PC-9 (cell line): ENCODE measurements at regions of chr1 and their contacts with region 1.

Region 1: DNA sequence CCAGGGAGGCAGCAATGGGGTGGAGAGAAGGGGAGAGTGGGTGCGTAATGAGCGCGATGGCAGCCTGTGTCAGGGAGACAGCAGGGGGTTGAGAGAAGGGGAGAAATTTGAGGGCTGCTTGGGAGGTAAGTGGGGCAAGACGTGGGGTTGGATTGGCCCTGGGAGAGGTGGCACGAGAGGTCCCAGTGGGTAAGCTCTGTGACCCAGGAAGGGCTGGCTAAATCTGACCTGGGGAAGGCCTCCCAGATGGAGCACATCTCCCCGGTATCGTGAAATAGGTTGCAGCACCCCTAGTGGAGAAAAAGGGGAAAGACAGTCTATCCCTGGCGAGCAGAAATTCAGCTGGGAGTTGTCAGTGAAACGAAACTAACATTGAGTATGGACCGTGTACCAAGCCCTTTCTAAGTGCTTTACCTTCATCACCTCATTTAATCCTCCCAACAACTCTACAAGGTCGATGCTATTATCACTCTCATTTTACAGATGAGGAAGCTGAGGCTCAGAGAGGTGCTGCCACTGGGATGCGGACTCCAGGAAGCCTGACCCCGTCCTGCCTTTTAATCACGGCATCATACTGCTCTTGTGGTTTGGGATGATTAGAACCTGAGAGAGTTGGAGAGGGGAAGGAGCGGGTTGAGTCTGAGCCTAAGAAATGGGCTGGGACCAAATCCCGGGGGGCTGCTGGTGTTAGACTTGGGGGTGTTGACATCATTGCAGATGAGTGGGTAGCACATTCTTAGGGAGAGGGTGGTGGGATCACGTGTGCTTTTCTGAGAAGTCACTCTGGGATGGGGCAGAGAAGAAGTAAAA is 56.6 kb upstream of the RPL11 start:
- DNase-seq: peak; percentile 59 to 62
- H3K4me3 ChIP-seq: peak overlapping the region; percentile 54; the same call in 1 of the 2 replicates
- H3K27ac ChIP-seq: peak overlapping the region; percentile 30; the same call in 1 of the 2 replicates
- H3K4me1 ChIP-seq: no peaks in the 10 kb centered on the region
- H3K27me3 ChIP-seq: no peaks in the 10 kb centered on the region
- CTCF ChIP-seq: peak; percentile 80

Region 2: GRCh38 chr1:23118957-23119792 is 515.9 kb before region 1 on chr1:
- CTCF ChIA-PET with region 1: interaction called, 13 read pairs
- POLR2A ChIA-PET with region 1: no interaction called
- intact Hi-C with region 1: no loop called
- DNase-seq: no peak
- H3K4me3 ChIP-seq: no peak overlapping the region
- H3K27ac ChIP-seq: no peak overlapping the region
- H3K4me1 ChIP-seq: peaks cover 16% of the 10 kb centered on the region
- H3K27me3 ChIP-seq: no peaks in the 10 kb centered on the region
- CTCF ChIP-seq: no peak

Region 3: DNA sequence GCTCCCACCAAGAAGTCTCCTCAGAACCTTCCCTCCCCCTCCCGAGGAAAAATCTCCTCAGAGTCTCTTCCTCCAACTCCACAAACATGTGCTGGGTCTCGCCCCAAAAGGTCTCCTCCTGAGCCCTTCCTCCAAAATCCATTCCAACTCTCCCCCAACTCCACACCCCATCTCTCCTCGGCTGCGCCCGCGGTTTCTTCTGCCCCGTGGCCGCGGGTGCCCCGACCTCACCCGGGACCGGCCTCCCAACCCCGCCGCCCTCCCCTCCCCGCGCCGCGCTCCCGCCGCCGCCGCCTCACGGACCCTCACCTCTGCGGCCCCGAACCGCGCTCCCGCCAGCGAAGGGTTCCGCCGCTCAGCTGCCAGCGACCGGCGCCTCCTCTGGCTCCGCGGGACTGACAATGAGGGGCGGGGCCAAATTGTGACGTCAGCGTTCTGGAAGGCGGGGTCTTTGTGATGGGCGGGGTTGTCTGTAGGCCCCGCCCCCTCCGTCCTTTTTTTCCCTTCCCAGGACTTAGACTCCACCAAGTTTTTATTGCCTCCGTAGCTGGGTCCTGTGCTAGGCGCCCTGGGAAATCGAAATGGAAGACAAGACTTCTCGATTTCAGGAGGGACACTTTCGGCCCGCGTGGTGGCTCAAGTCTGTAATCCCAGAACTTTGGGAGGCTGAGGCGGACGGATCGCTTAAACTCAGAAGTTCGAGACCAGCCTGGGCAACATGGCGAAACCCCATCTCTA is 466.4 kb before region 1 on chr1 and contains the start of gene LUZP1:
- CTCF ChIA-PET with region 1: interaction called, 15 read pairs
- POLR2A ChIA-PET with region 1: no interaction called
- intact Hi-C with region 1: no loop called
- DNase-seq: peak; percentile 39 to 80
- H3K4me3 ChIP-seq: peak within 1 kb of the TSS; percentile 75
- H3K27ac ChIP-seq: peak within 1 kb of the TSS; percentile 58
- H3K4me1 ChIP-seq: peaks cover 6% of the 10 kb centered on the region
- H3K27me3 ChIP-seq: no peaks in the 10 kb centered on the region
- CTCF ChIP-seq: no peak
- total RNA-seq, gene LUZP1: 35.0 and 37.6 TPM in 2 replicates

Region 4: GRCh38 chr1:23496490-23497181 is 138.4 kb before region 1 on chr1:
- CTCF ChIA-PET with region 1: interaction called, 13 read pairs
- POLR2A ChIA-PET with region 1: no interaction called
- intact Hi-C with region 1: no loop called
- DNase-seq: no peak
- H3K4me3 ChIP-seq: no peak overlapping the region
- H3K27ac ChIP-seq: no peak overlapping the region
- H3K4me1 ChIP-seq: no peaks in the 10 kb centered on the region; the same call in 1 of the 2 replicates
- H3K27me3 ChIP-seq: no peaks in the 10 kb centered on the region
- CTCF ChIP-seq: no peak

Region 5: DNA sequence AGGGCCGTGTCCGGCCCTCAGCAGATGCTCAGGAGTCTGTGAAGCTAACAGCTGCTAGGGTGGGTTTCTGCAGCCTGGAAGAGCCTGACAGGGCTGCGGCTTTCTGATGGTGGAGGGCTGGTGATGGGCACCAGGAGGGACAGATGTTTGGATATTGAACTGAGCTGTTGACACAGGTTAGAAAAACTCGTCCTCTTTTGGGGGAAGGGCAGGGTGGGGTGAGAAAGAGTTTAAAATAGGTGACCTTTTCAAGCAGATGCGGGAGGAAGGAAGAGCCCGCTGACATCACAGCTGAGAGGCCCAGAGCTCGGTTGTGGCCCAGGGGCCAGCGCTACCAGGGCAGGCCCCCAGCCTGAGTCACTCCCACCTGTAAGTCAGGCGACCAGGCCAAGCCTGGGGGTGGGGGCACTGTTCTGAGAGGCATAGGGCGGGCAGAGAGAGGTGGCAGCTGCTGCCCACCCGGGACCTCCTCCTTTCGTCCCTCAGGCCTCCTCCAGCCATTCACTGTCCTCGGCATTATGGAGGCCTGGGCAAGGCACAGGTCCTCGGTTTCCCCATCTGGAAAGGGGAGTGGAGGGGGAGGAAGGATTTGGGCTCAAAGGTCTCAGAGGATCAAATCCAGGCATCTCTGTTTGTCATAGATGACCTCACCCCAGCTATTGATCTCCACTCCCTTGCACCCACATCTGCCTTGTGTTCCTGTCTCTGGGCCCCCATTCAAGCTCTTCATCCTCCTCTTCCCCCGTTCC is 43.4 kb before region 1 on chr1:
- CTCF ChIA-PET with region 1: interaction called, 9 read pairs
- POLR2A ChIA-PET with region 1: no interaction called
- intact Hi-C with region 1: loop called (anchors 5 kb)
- DNase-seq: no peak
- H3K4me3 ChIP-seq: no peak overlapping the region
- H3K27ac ChIP-seq: peak overlapping the region; percentile 93; the same call in 1 of the 2 replicates
- H3K4me1 ChIP-seq: peaks cover 39% of the 10 kb centered on the region
- H3K27me3 ChIP-seq: no peaks in the 10 kb centered on the region
- CTCF ChIP-seq: no peak

Region 6: GRCh38 chr1:23727362-23727827 is 92.3 kb after region 1 on chr1:
- CTCF ChIA-PET with region 1: no interaction called
- POLR2A ChIA-PET with region 1: no interaction called
- intact Hi-C with region 1: no loop called
- DNase-seq: no peak
- H3K4me3 ChIP-seq: no peak overlapping the region
- H3K27ac ChIP-seq: no peak overlapping the region
- H3K4me1 ChIP-seq: no peaks in the 10 kb centered on the region
- H3K27me3 ChIP-seq: no peaks in the 10 kb centered on the region
- CTCF ChIP-seq: no peak

Region 7: DNA sequence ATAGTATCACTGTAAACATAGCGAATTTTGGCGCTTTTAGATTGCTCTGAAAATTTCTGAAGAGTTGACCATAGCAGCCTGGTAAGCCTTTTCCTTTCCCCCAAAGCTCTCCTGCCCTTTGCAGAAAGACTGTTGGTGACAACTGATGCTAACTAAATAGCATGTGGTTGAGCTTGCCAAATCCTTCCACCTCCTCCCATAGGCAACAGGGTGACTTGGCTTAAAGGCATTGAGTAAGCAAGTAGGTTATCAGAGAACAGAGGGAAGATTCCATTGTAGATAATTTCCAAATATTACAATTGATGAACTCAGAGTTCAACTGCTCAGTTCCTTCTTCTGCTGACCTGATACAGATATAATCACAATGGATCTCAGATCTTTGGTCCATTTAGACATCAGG is 210.1 kb after region 1 on chr1:
- CTCF ChIA-PET with region 1: no interaction called
- POLR2A ChIA-PET with region 1: no interaction called
- intact Hi-C with region 1: no loop called
- DNase-seq: no peak
- H3K4me3 ChIP-seq: no peak overlapping the region
- H3K27ac ChIP-seq: no peak overlapping the region
- H3K4me1 ChIP-seq: no peaks in the 10 kb centered on the region
- H3K27me3 ChIP-seq: no peaks in the 10 kb centered on the region
- CTCF ChIP-seq: no peak

Region 8: DNA sequence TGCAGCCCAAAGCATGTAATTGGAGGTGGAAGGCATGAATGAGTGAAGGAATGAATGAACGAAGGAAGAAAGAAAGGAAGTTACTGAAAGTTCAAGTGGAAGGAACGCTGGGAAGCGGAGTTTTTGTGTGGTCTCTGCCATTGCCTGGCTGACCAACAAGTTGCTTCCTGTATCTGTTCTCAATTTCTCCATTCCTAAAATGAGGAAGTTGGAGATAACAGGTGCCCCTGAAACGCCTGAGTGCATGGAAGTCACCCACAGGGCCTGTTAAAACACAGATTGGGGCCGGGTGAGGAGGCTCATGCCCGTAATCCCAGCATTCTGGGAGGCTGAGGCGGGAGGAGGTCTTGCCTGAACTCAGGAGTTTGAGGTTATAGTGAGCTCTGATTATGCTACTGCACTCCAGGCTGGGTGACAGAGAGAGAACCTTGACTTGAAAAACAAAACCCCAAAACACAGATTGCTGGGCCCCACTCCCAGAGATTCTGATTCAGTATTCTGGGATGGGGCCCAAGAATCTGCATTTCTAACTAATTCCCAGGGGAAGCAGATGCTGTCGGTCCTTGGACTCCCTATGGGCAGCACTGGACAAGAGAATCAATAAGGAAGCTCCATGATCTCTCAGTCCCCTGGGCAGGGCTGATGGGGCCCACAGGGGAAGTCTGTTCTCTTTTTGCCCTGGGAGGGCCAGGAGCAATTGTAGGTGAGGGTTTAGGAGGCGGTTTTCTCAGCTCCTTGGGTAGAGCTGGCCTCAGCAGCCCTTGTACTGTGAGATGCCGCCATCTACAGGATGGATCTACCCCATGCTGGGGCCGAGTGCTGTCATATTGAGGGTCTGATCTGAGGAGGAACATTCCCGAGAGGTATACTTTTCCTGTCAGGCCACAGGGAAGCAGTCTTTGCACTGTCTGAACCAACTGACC is 281.4 kb after region 1 on chr1:
- CTCF ChIA-PET with region 1: interaction called, 6 read pairs
- POLR2A ChIA-PET with region 1: no interaction called
- intact Hi-C with region 1: loop called (anchors 2 kb)
- DNase-seq: peak; percentile 60 to 74
- H3K4me3 ChIP-seq: no peak overlapping the region
- H3K27ac ChIP-seq: no peak overlapping the region
- H3K4me1 ChIP-seq: peaks cover 8% of the 10 kb centered on the region; the same call in 1 of the 2 replicates
- H3K27me3 ChIP-seq: no peaks in the 10 kb centered on the region
- CTCF ChIP-seq: peak; percentile 68